RWPE1 (cell line): ENCODE measurements at regions of chr12 and their contacts with region 1.

Region 1: DNA sequence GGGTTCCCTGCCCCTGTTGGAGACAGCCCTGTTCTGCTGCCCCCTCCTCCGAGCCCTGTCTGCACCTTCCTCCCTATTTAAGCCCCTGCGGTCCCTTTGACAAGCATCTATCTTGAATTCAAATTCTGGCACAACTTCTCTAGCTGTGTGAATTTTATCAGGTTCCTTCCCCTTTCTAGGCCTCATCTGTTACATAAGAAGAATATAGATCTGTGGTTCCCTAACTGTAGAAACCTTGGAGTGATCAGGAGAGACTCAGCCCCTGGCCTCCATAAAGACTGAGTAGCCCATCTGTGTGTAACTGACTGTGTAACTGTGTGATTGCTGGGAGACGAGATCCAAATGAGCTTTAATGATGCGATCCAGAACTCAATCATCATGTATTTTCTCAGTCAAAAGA is 13.0 kb upstream of the RACGAP1 start:
- DNase-seq: no peak
- H3K27ac ChIP-seq: no peak overlapping the region
- CTCF ChIP-seq: no peak

Region 2: DNA sequence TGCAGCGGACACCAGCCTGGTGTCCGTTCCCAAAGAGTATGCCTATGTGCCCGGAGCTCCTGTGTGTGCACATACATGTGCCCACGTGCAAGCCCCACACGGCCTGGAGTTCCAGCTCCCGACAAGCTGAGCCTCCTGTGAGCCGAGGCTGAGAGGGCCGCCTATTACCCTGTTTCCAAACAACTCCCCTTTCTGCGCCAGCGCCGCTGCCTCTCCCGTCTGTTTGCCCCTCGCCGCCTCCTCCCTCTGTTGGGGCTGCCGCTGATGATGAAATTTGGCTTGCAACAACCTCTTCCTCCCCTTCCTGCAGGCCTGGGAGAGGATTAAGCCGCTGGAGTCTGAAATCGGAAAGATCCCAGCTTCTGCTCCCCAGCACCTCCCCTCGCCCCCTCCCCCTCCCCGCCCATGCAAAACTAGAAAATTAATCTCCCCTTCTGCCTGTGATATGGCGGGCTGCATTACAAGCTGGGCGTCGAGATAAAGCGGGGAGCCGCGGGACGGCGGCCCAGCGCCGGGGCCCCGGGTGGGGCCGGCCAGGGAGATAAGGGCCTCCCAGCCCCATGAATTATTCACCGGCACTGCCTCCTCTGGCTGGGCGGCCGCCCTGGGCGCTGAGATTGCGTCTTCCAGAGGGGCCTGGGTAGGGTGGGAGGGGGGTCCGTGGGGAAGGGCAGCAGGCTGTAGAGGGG is 12.2 kb after region 1 on chr12:
- CTCF ChIA-PET with region 1: interaction called, 16 read pairs
- POLR2A ChIA-PET with region 1: no interaction called
- DNase-seq: no peak
- H3K27ac ChIP-seq: peak overlapping the region; percentile 26
- CTCF ChIP-seq: no peak